Endothelial cell of umbilical vein (primary cell): ENCODE measurements at regions of chr3 and their contacts with region 1.

Region 1: DNA sequence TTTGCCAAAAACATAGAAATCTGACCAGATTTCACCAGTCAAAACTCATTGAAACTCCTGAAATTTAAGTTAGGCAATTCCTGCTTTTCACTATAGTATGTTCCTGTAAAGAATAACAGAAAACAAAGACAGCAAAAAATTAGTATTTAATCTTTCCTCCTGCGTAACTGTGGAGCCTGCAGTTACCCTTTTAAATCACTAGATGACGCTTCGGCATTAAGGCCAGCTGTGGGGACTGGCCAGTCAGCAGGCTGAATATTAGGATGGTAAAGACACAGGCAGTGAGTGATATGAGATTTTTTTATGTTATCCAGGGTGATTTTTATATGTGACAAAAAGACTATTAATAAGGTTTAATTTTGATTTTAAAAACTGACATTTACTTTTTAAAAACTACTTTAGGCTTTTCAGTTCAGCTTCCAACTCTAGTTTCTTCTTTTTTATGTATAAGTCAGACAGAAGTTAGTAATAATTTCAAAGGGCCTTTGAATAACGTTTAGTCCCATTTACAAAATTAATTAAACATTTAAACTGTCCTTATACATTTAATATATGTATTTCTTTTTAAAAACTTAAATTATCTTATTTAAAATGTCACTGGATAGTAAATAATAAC is 165.1 kb downstream of the PPM1L start:
- DNase-seq: peak; percentile 55
- H3K4me3 ChIP-seq: no peak overlapping the region
- H3K27ac ChIP-seq: no peak overlapping the region
- H3K4me1 ChIP-seq: no peaks in the 10 kb centered on the region
- H3K27me3 ChIP-seq: no peaks in the 10 kb centered on the region
- CTCF ChIP-seq: peak; percentile 75 to 77
- POLR2A ChIP-seq: no peak

Region 2: GRCh38 chr3:161171113-161171512 is 250.0 kb after region 1 on chr3:
- CTCF ChIA-PET with region 1: no interaction called
- POLR2A ChIA-PET with region 1: no interaction called
- dilution Hi-C with region 1: no loop called
- intact Hi-C with region 1: loop called (anchors 1 kb)
- DNase-seq: peak; percentile 84
- H3K4me3 ChIP-seq: no peak overlapping the region
- H3K27ac ChIP-seq: no peak overlapping the region
- H3K4me1 ChIP-seq: peaks cover 25% of the 10 kb centered on the region
- H3K27me3 ChIP-seq: no peaks in the 10 kb centered on the region
- CTCF ChIP-seq: no peak
- POLR2A ChIP-seq: peak; percentile 21

Region 3: GRCh38 chr3:161203485-161204098 is 282.5 kb after region 1 on chr3:
- CTCF ChIA-PET with region 1: no interaction called
- POLR2A ChIA-PET with region 1: no interaction called
- dilution Hi-C with region 1: no loop called
- intact Hi-C with region 1: loop called (anchors 1 kb)
- DNase-seq: no peak
- H3K4me3 ChIP-seq: no peak overlapping the region
- H3K27ac ChIP-seq: no peak overlapping the region
- H3K4me1 ChIP-seq: no peaks in the 10 kb centered on the region
- H3K27me3 ChIP-seq: no peaks in the 10 kb centered on the region
- CTCF ChIP-seq: no peak
- POLR2A ChIP-seq: no peak

Region 4: GRCh38 chr3:161409069-161409468 is 487.9 kb after region 1 on chr3:
- CTCF ChIA-PET with region 1: no interaction called
- POLR2A ChIA-PET with region 1: interaction called, 3 read pairs
- dilution Hi-C with region 1: no loop called
- intact Hi-C with region 1: loop called (anchors 1 kb)
- DNase-seq: peak; percentile 61
- H3K4me3 ChIP-seq: no peak overlapping the region
- H3K27ac ChIP-seq: no peak overlapping the region
- H3K4me1 ChIP-seq: no peaks in the 10 kb centered on the region
- H3K27me3 ChIP-seq: no peaks in the 10 kb centered on the region
- CTCF ChIP-seq: peak; percentile 48 to 51
- POLR2A ChIP-seq: no peak